WTC11 (cell line): ENCODE measurements at regions of chr17 and their contacts with region 1.

Region 1: DNA sequence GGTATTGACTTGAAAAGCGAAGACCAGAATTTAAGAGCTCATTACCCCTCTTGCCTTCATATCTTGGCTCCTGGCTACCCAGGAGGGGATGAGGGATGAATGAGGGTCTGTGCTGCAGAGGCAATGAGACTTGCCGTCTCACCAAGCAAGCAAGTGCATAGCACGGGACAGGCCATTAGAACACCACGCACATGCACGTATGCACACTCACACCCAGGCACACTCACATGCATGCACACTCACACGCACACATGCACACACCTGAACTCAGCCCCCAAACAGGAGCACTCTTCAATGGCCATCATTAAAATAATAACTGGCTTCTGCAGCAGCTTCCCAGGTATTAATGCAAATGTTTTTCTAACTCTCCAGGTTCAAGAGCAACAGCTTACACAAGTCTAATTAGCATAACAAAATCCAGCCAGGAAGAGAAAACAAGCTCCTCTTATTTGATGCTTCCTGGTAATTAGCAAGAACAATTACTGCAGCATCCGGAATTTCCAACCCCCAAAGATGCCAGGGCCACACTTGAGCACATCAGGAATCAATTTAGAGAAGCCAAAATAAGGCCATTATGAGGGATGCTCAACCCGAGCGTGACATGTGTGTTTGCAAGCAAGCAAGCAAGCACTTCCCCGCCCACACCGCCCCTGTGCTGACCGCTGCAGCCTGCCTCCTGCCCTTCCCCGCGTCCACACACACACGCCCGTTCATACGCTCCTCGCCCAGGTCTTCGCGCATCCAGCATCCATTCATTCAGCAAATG is 171.6 kb upstream of the TNRC6C start:
- DNase-seq: peak; percentile 61
- ATAC-seq: peak; percentile 41
- H3K4me3 Mint-ChIP-seq: peak overlapping the region; percentile 41
- H3K27ac Mint-ChIP-seq: peak overlapping the region; percentile 58
- H3K4me1 Mint-ChIP-seq: peaks cover 80% of the 10 kb centered on the region
- H3K27me3 Mint-ChIP-seq: peaks cover 94% of the 10 kb centered on the region
- CTCF ChIP-seq: no peak

Region 2: DNA sequence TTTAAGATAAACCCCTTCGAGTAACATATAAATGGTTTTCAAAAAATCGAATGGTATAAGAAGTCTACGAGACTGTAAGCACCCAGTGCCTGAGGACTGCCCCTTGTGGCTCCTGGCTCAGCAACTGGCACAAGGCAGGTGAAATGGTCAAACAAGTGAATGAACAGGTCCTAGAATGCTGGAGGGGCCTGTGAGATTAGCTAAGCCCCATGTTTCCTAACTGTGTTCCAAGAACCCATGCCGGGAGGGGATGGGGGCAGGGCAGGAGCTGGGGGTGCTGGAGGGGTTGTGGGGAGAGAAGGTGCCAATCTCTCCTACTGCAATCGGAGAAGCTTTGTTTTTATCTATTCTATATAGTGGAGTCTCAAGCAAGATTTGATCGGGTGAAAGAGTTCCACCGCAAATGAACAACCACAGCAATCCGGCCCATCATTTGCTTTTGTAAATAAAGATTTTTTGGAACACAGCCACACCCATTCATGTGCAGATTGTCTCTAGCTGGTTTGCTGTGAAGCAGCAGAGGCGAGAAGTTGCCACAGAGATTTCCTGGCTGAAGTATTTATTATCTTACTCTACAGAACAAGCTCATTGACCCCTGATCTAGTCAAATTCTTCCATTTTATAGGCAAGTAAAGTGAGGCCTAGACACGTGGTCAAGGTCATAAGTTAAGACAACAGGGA is 24.0 kb before region 1 on chr17:
- CTCF ChIA-PET with region 1: no interaction called
- POLR2A ChIA-PET with region 1: no interaction called
- DNase-seq: no peak
- ATAC-seq: peak; percentile 43; the same call in 1 of the 2 replicates
- H3K4me3 Mint-ChIP-seq: no peak overlapping the region
- H3K27ac Mint-ChIP-seq: no peak overlapping the region
- H3K4me1 Mint-ChIP-seq: peaks cover 20% of the 10 kb centered on the region
- H3K27me3 Mint-ChIP-seq: no peaks in the 10 kb centered on the region
- CTCF ChIP-seq: no peak

Region 3: DNA sequence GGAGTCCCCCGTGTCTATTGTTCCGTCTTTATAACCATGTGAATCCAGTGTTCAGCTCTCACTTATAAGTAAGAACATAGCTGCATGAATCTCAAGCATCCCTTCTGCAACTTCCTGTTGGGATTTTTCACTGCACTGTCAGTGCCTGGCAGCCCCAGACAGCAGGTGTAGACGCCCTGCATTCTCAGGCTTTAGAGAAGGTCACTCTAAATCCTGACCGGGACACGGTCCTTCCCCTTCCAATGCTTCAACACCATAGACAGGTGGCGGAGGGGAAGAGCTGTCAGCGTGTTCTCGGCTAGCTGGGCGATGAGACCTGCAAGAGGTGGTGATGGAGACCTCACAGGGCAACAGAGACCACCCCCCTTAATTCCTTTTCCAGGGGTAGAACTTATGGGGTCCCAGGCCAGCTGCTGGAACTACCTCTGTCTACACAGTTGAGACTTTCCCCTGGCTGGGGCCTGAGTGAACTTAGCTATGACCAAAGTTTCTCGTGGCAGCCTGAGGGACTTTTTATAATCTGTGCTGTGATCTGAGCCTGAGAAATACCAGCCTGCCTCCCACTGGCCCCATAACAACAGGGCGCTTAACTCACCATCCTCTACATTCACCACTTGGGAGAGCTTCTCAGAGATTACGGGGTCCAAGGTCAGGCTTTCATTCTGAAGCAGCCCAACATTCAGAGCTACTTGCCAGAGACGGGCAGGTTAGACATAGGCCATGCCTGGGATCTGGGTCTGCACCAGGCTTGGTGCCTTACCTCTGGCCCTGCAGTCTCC is 28.4 kb after region 1 on chr17:
- CTCF ChIA-PET with region 1: interaction called, 10 read pairs
- POLR2A ChIA-PET with region 1: no interaction called
- DNase-seq: no peak
- ATAC-seq: peak; percentile 77
- H3K4me3 Mint-ChIP-seq: no peak overlapping the region
- H3K27ac Mint-ChIP-seq: no peak overlapping the region
- H3K4me1 Mint-ChIP-seq: peaks cover 24% of the 10 kb centered on the region
- H3K27me3 Mint-ChIP-seq: peaks cover 9% of the 10 kb centered on the region
- CTCF ChIP-seq: no peak

Region 4: DNA sequence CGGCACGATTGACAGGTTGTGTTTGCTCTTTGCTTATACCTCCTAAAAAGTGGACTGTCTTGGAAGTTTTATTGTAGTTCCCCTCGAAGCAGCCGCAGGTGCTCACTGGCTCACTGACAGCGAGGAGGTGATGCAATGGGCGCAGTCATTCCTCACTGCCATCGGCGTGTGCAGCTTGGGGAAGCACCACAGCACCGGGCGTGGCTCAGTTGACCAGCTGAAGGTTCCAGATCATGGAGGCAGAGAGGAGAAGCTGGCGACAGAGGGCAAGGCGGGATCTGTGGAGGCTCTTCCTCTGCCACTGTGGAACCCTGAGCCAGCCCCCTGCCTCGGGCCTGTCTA is 99.4 kb after region 1 on chr17:
- CTCF ChIA-PET with region 1: no interaction called
- POLR2A ChIA-PET with region 1: no interaction called
- DNase-seq: no peak
- ATAC-seq: no peak
- H3K4me3 Mint-ChIP-seq: no peak overlapping the region
- H3K27ac Mint-ChIP-seq: no peak overlapping the region
- H3K4me1 Mint-ChIP-seq: peaks cover 38% of the 10 kb centered on the region
- H3K27me3 Mint-ChIP-seq: peaks cover 33% of the 10 kb centered on the region
- CTCF ChIP-seq: no peak